Mammary epithelial cell (primary cell): ENCODE measurements at regions of chr5 and their contacts with region 1.

Region 1: DNA sequence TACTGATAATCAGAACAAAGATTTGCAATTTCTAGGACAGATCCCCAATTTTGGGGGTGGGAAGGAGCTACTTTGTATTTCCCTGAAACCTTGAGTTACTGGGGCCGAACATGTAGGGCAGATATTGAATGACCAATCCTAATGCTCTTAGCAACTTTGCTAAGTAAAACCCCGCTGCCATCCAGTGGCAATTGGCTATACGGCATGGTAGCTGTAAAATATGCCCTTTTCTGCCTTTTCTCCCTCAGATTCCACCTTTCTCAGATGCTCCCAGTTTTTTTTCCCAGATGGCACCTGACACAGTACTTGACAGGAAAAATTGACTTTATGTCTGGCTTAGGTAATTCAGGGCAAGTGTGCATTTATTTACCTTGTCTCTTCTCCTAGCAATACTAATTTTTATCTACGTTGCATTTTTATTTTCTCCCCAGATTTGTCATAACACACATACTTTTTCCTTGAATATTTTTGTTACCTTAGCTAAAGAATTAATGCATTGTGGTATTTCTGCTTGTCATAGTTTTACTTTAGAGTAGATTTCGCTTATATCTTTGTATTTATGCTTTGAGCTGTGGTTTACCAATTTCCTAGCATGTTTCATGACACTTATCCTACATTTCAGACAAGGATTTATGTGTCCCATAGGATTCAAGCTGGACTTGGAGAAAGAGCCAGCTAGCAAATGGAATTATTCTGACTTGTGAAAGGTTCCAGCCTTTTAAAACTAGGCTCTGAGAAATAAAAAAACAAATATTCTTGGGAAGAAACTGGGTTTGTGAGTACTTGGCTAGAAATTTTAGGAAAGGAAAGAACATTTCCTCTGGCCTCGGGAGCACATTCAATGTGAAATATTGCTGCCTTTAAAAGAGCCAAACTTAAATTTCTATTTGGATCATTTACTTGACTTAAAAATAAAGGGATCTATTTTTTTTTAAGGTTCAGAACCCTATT is 37.4 kb downstream of the PIK3R1 start:
- DNase-seq: peak; percentile 59
- H3K4me3 ChIP-seq: no peak overlapping the region
- H3K27ac ChIP-seq: peak overlapping the region; percentile 40
- H3K4me1 ChIP-seq: peaks cover 47% of the 10 kb centered on the region
- H3K27me3 ChIP-seq: no peaks in the 10 kb centered on the region
- CTCF ChIP-seq: peak; percentile 85 to 96

Region 2: GRCh38 chr5:67165526-67166459 is 1087.2 kb before region 1 on chr5:
- CTCF ChIA-PET with region 1: no interaction called
- dilution Hi-C with region 1: no loop called
- in situ Hi-C with region 1: no loop called
- intact Hi-C with region 1: loop called (anchors 5 kb)
- DNase-seq: peak; percentile 82
- H3K4me3 ChIP-seq: no peak overlapping the region
- H3K27ac ChIP-seq: peak overlapping the region; percentile 65
- H3K4me1 ChIP-seq: peaks cover 40% of the 10 kb centered on the region
- H3K27me3 ChIP-seq: no peaks in the 10 kb centered on the region
- CTCF ChIP-seq: peak; percentile 71 to 88

Region 3: GRCh38 chr5:67301285-67301903 is 951.6 kb before region 1 on chr5:
- CTCF ChIA-PET with region 1: no interaction called
- dilution Hi-C with region 1: no loop called
- in situ Hi-C with region 1: no loop called
- intact Hi-C with region 1: loop called (anchors 5 kb)
- DNase-seq: peak; percentile 89
- H3K4me3 ChIP-seq: no peak overlapping the region
- H3K27ac ChIP-seq: peak overlapping the region; percentile 67
- H3K4me1 ChIP-seq: peaks cover 47% of the 10 kb centered on the region
- H3K27me3 ChIP-seq: no peaks in the 10 kb centered on the region
- CTCF ChIP-seq: no peak

Region 4: GRCh38 chr5:67395790-67396418 is 857.0 kb before region 1 on chr5:
- CTCF ChIA-PET with region 1: no interaction called
- dilution Hi-C with region 1: no loop called
- in situ Hi-C with region 1: no loop called
- intact Hi-C with region 1: loop called (anchors 5 kb)
- DNase-seq: no peak
- H3K4me3 ChIP-seq: no peak overlapping the region
- H3K27ac ChIP-seq: no peak overlapping the region
- H3K4me1 ChIP-seq: no peaks in the 10 kb centered on the region
- H3K27me3 ChIP-seq: no peaks in the 10 kb centered on the region
- CTCF ChIP-seq: no peak

Region 5: GRCh38 chr5:67648201-67648671 is 604.7 kb before region 1 on chr5:
- CTCF ChIA-PET with region 1: no interaction called
- dilution Hi-C with region 1: no loop called
- in situ Hi-C with region 1: no loop called
- intact Hi-C with region 1: loop called (anchors 10 kb)
- DNase-seq: no peak
- H3K4me3 ChIP-seq: no peak overlapping the region
- H3K27ac ChIP-seq: no peak overlapping the region
- H3K4me1 ChIP-seq: no peaks in the 10 kb centered on the region
- H3K27me3 ChIP-seq: no peaks in the 10 kb centered on the region
- CTCF ChIP-seq: no peak

Region 6: DNA sequence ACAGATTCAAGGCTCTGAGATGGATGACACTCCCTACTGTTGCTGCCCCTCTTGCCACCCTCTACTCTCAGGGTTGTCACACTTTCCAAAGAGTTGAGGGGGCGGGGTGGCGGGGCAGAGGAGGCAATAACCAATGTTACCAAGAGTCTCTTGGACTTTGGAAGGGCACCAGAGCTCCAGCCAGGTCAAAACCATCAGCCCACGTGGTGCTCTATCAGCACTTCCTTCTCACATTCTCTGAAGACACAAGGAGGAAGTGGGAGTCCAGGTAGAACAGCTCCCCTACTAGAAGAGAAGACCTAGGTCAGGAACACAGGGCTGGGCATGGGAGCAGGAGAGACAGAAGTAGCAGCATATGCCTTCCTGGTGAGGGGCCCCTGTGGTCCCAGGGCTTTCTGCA is 70.4 kb before region 1 on chr5:
- CTCF ChIA-PET with region 1: no interaction called
- dilution Hi-C with region 1: loop called (anchors 5 kb)
- in situ Hi-C with region 1: no loop called
- intact Hi-C with region 1: no loop called
- DNase-seq: no peak
- H3K4me3 ChIP-seq: no peak overlapping the region
- H3K27ac ChIP-seq: no peak overlapping the region
- H3K4me1 ChIP-seq: peaks cover 9% of the 10 kb centered on the region
- H3K27me3 ChIP-seq: no peaks in the 10 kb centered on the region
- CTCF ChIP-seq: no peak